ENCODE measurements at regions of chr17 and their contacts with region 1.

Region 1: DNA sequence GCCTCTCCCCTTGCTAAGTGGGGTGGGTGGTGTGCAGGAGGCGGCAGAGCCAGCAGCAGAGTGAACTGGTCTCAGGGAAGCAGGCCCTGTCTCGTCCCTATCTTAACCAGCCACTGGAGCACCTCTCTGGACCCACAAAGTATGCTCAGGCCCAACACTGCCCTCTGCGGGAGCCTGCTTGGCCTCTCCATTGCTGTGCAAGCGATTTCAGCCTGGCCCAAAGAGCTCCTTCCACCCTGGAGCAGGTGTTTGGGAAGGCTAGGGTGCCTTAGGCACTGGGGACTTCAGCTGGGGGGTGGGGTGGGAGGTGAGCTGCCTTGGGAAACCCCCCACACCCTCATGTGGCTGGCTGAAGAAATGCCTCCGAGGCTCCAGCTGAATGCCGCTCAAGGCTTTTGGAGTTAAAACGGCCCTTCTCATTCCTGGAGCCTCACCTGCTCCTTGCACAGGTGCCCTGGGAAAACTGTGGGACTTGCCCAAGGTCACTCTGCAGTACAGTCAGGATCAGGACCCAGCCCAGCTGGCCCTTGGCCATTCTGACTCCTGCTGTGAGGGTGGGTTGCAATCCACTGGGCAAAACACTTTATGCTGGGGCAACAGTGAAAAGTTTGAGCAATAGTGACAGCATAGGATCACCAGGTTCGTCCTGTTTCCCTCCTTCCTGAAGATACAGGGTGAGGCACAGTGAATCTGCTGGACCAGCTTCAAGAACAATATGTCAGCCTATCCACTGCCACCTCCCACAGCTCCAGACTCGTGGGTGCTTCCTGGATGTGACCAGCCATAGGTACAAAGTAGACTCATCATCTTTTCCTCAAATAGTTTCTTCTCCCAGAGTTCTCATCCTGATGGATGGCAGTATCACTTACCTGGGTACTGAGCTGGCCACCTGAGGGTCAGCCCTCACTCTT is 5.9 kb upstream of the UBE2O start:
- DNase-seq: no peak
- ATAC-seq: peak; percentile 95
- H3K4me3 ChIP-seq: no peak overlapping the region
- H3K27ac ChIP-seq: no peak overlapping the region
- H3K4me1 ChIP-seq: no peaks in the 10 kb centered on the region
- H3K27me3 ChIP-seq: no peaks in the 10 kb centered on the region
- CTCF ChIP-seq: peak; percentile 90

Region 2: GRCh38 chr17:76408052-76408849 is 50.6 kb before region 1 on chr17:
- CTCF ChIA-PET with region 1: interaction called, 32 read pairs
- POLR2A ChIA-PET with region 1: no interaction called
- in situ Hi-C with region 1: no loop called
- intact Hi-C with region 1: loop called (anchors 2 kb)
- DNase-seq: no peak
- ATAC-seq: peak; percentile 83
- H3K4me3 ChIP-seq: no peak overlapping the region
- H3K27ac ChIP-seq: no peak overlapping the region
- H3K4me1 ChIP-seq: no peaks in the 10 kb centered on the region
- H3K27me3 ChIP-seq: no peaks in the 10 kb centered on the region
- CTCF ChIP-seq: peak; percentile 97

Measured in Panc1 (cell line).